ENCODE measurements at regions of chr5 and their contacts with region 1.

Region 1: DNA sequence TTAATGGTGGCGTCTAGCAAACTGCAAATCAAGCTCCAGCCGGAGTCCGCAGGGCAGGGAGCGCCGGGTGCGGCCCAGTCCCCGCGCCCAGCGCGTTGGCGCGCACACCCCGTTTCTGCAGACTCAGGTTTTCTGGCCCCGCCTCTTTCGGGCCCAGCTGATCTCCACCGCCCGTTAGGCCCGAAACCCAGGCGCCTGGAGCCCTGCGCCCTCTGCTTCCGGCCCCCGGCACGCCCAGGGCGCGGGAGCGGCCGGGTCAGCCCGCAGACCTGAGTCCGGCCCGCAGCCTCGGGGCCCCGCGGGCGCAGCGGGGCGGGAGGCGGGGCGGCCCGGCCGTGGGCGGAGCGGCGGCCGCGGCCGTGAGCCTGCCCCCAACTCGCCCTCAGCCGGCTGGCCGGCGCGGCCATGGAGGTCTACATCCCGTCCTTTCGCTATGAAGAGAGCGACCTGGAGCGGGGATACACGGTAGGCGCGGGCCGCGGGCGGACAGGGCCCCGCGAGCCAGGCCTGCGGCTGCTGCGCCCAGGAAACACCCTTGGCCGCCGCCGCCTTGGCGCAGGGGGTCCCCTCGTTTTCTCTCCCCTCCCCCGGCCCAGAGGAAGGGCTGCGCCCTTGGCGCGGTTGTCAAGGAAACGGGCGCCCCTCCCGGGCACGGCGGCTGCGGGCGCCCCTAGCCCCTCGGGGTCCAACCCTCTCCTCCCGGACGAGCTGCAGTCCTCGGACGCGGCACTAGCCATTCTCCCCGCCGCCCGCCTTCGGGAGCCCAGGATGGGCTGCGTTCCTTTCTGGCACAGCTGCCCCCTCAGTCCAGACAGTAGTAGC is at the start of gene SNX24:
- DNase-seq: peak; percentile 61
- H3K4me3 Mint-ChIP-seq: peak within 1 kb of the TSS; percentile 85
- H3K27ac Mint-ChIP-seq: no peak within 1 kb of the TSS
- H3K4me1 Mint-ChIP-seq: peaks cover 17% of the 10 kb centered on the region
- H3K27me3 Mint-ChIP-seq: peaks cover 18% of the 10 kb centered on the region
- total RNA-seq, gene SNX24: 1.2 and 1.6 TPM in 2 replicates

Region 2: GRCh38 chr5:122704243-122705036 is 141.0 kb before region 1 on chr5:
- intact Hi-C with region 1: loop called (anchors 10 kb)
- DNase-seq: no peak
- H3K4me3 Mint-ChIP-seq: no peak overlapping the region
- H3K27ac Mint-ChIP-seq: no peak overlapping the region
- H3K4me1 Mint-ChIP-seq: peaks cover 6% of the 10 kb centered on the region
- H3K27me3 Mint-ChIP-seq: no peaks in the 10 kb centered on the region

Region 3: DNA sequence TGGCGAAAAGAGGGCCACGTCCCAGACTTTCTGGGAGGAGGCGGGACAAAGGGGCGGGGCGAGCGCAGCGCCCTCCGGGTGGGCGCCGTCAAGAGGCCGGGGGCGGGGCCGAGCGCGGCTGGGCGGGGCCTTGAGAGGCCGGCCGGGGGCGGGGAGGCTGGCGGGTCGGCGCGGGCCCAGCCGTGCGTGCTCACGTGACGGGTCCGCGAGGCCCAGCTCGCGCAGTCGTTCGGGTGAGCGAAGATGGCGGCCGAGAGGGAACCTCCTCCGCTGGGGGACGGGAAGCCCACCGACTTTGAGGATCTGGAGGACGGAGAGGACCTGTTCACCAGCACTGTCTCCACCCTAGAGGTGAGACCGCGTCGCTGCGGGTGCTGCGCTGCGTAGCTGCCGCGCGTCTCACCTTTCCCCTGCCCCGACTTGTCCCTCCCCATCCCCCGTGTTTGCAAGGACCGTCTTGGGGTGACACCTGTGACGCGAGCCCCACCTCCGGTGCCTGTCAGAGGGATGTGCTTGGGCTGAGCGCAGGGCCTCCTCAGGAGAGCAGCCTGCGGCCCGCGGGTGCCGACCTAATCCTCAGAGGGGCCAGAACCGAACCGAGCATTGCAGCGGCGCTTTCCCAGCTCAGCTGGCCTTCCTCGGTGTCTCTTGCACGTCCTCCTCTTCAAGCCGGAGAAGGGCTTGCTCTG is 70.4 kb before region 1 on chr5 and contains the start of gene SNX2:
- intact Hi-C with region 1: loop called (anchors 1 kb)
- DNase-seq: peak; percentile 79
- H3K4me3 Mint-ChIP-seq: peak within 1 kb of the TSS; percentile 95
- H3K27ac Mint-ChIP-seq: peak within 1 kb of the TSS; percentile 82
- H3K4me1 Mint-ChIP-seq: peaks cover 32% of the 10 kb centered on the region
- H3K27me3 Mint-ChIP-seq: peaks cover 4% of the 10 kb centered on the region
- total RNA-seq, gene SNX2: 30.5 and 35.0 TPM in 2 replicates

Region 4: GRCh38 chr5:123273984-123274383 is 428.5 kb after region 1 on chr5:
- intact Hi-C with region 1: no loop called
- DNase-seq: no peak
- H3K4me3 Mint-ChIP-seq: no peak overlapping the region
- H3K27ac Mint-ChIP-seq: no peak overlapping the region
- H3K4me1 Mint-ChIP-seq: no peaks in the 10 kb centered on the region
- H3K27me3 Mint-ChIP-seq: peaks cover 5% of the 10 kb centered on the region